Uterus (tissue), 4 donors: ENCODE measurements at regions of chr9 and their contacts with region 1.

Region 1: DNA sequence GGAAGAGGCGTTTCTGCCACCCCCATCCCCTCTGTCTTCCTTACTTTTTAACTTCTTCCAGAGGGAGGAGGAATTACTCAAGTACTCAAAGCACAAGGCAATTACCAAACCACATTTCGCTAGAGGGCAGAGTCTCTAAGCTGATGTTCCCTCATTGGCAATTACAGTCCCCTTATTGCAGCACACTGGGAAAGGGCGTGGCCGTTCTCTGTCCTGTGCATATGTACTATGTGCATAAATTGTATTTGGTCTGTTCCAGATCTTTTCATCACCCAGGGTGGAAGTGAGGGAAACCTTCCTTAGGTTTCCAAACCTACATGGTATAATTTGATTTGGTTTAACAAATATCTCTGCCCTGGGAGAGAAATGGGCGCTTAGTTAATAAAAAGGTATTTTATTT is 29.8 kb upstream of the ALDOB start:
- DNase-seq: peak in 1 of 2 donors; percentile 27
- H3K4me3 ChIP-seq: no peak overlapping the region
- H3K27ac ChIP-seq: no peak overlapping the region
- H3K4me1 ChIP-seq: no peaks in the 10 kb centered on the region
- H3K27me3 ChIP-seq: no peaks in the 10 kb centered on the region
- CTCF ChIP-seq: peak in 2 of 4 experiments; percentile 18 to 24
- POLR2A ChIP-seq: no peak

Region 2: GRCh38 chr9:100880284-100880683 is 585.1 kb before region 1 on chr9:
- intact Hi-C with region 1: no loop called
- DNase-seq: no peak
- H3K4me3 ChIP-seq: no peak overlapping the region
- H3K27ac ChIP-seq: no peak overlapping the region
- H3K4me1 ChIP-seq: no peaks in the 10 kb centered on the region
- H3K27me3 ChIP-seq: no peaks in the 10 kb centered on the region
- CTCF ChIP-seq: no peak
- POLR2A ChIP-seq: no peak

Region 3: DNA sequence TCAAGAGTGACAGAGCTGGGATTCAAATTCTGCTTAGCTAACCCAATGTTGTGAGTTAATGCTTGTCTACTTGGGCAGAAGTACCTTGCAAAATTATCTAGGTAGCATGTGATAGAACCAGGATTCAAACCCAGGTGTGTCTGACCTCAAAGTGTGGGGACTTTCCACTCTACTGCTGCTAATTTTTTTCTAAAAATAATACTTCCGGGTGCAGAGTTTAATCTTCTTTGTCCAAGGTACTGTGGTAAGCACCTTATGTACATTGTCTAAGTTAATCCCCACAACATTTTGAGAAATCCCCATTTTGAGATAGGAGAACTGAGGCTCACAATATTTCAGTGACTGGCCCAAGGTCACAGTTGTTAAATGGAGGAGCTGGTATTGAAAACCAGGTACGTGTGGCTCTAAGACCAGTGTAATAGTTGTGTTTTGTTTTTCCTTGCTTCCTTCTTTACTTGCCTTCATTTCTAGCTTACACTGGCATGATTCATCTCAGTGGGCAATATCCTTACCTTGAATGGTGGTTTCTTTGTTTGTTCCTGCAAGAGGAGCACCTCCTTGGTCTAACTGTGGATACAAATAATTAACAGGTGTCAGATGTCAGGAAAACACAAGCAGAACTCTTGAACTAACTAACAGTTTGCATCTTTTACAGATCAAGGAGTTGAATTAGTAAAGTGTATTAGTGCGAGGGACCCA is 37.3 kb before region 1 on chr9:
- intact Hi-C with region 1: no loop called
- DNase-seq: no peak
- H3K4me3 ChIP-seq: no peak overlapping the region
- H3K27ac ChIP-seq: no peak overlapping the region
- H3K4me1 ChIP-seq: no peaks in the 10 kb centered on the region
- H3K27me3 ChIP-seq: no peaks in the 10 kb centered on the region
- CTCF ChIP-seq: no peak
- POLR2A ChIP-seq: no peak

Region 4: GRCh38 chr9:101527066-101527465 is 61.7 kb after region 1 on chr9:
- intact Hi-C with region 1: loop called (anchors 10 kb)
- DNase-seq: no peak
- H3K4me3 ChIP-seq: no peak overlapping the region
- H3K27ac ChIP-seq: no peak overlapping the region
- H3K4me1 ChIP-seq: no peaks in the 10 kb centered on the region
- H3K27me3 ChIP-seq: no peaks in the 10 kb centered on the region
- CTCF ChIP-seq: no peak
- POLR2A ChIP-seq: no peak

Region 5: DNA sequence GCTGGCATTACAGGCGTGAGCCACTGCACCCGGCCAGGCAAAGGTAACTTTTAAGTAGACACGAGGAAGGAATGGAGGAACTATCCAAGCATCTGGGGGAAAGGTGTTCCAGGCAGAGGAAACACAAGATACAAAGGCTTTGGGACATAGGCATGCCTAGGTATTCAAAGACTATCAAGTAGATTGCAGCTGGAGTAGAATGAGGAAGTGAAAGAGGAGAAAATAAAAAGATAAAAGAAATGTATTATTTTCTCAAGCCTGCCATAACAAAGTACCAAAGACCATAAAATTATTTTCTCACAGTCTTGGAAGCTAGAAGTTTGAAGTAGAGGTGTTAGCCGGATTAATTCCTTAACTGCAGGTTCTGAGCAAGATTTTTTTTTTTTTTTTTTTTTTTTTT is 312.9 kb after region 1 on chr9:
- intact Hi-C with region 1: no loop called
- DNase-seq: no peak
- H3K4me3 ChIP-seq: no peak overlapping the region
- H3K27ac ChIP-seq: no peak overlapping the region
- H3K4me1 ChIP-seq: no peaks in the 10 kb centered on the region
- H3K27me3 ChIP-seq: no peaks in the 10 kb centered on the region
- CTCF ChIP-seq: no peak
- POLR2A ChIP-seq: no peak